ENCODE measurements at regions of chr9 and their contacts with region 1.

Region 1: GRCh38 chr9:136275655-136276429 is 28.1 kb downstream of the CCDC187 start:
- DNase-seq: no peak
- ATAC-seq: no peak
- H3K4me3 ChIP-seq: no peak overlapping the region
- H3K27ac ChIP-seq: no peak overlapping the region
- H3K4me1 ChIP-seq: no peaks in the 10 kb centered on the region
- H3K27me3 ChIP-seq: no peaks in the 10 kb centered on the region
- CTCF ChIP-seq: no peak
- POLR2A ChIP-seq: no peak

Region 2: GRCh38 chr9:136143216-136144001 is 132.4 kb before region 1 on chr9:
- intact Hi-C with region 1: loop called in 1 of 2 experiments (anchors 10 kb)
- DNase-seq: peak in 1 of 3 donors; percentile 49
- ATAC-seq: peak in 3 of 4 donors; percentile 16 to 42 (median 23)
- H3K4me3 ChIP-seq: no peak overlapping the region
- H3K27ac ChIP-seq: no peak overlapping the region
- H3K4me1 ChIP-seq: no peaks in the 10 kb centered on the region
- H3K27me3 ChIP-seq: no peaks in the 10 kb centered on the region
- CTCF ChIP-seq: peak in 3 of 4 donors; percentile 12 to 39 (median 22)
- POLR2A ChIP-seq: no peak

Region 3: GRCh38 chr9:136157477-136158265 is 118.2 kb before region 1 on chr9:
- intact Hi-C with region 1: no loop called
- DNase-seq: no peak
- ATAC-seq: peak in 2 of 4 donors; percentile 7 to 24
- H3K4me3 ChIP-seq: no peak overlapping the region
- H3K27ac ChIP-seq: no peak overlapping the region
- H3K4me1 ChIP-seq: no peaks in the 10 kb centered on the region
- H3K27me3 ChIP-seq: no peaks in the 10 kb centered on the region
- CTCF ChIP-seq: no peak
- POLR2A ChIP-seq: no peak

Region 4: DNA sequence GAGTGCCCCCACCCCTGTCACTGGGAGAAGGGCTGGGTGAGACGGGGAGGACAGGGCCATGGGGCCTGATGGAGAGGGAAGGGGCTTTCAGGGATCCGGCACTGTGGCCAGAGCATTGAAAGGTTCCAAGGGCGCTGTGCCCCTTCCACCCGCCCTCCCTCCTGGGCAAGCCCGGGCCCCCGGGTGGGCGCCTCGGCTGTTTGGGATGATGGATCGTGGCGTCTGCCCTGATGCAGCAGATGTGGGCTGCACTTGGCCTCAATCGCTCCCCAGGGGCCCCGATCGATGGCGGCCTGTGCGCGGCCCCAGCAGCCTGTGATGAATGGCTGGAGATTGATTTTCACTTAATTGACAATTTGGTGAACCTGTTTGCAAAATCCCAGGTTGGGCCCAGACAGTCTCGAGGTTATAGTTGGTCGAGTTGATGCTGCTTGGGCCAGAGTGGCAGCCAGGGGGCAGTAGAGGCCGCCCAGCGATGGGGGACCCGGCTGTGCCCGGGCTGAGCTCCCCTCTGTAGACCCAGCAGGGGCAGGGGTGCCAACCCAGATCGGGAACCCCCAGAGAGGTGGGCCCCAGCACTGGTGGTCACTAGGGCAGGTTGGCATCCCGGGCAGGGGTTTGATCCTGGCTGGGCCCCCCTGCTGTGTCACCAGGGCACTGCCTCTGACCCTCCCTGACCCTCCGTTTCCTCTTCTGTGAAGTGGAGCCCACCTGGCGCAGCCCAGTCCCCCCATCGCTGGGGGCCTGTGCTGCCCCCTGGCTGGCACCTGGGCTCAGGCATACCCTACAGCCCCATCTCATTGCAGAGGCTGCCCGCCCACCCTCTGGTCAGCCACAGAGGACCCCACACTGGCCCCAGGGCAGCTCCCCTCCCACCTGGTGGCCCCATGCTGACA is 105.6 kb before region 1 on chr9:
- intact Hi-C with region 1: loop called in 1 of 2 experiments (anchors 10 kb)
- DNase-seq: peak; percentile 49 to 63 (median 57)
- ATAC-seq: peak; percentile 76 to 90 (median 85)
- H3K4me3 ChIP-seq: no peak overlapping the region
- H3K27ac ChIP-seq: no peak overlapping the region
- H3K4me1 ChIP-seq: no peaks in the 10 kb centered on the region
- H3K27me3 ChIP-seq: no peaks in the 10 kb centered on the region
- CTCF ChIP-seq: peak; percentile 66 to 81 (median 69)
- POLR2A ChIP-seq: no peak

Region 5: GRCh38 chr9:137114610-137115391 is 839.0 kb after region 1 on chr9 and contains the start of gene DPP7:
- intact Hi-C with region 1: no loop called
- DNase-seq: peak; percentile 83 to 85 (median 85)
- ATAC-seq: peak; percentile 88 to 97 (median 90)
- H3K4me3 ChIP-seq: peak within 1 kb of the TSS; percentile 68 to 79 (median 70)
- H3K27ac ChIP-seq: no peak within 1 kb of the TSS
- H3K4me1 ChIP-seq: peaks cover 0 to 4% (median 1%) of the 10 kb centered on the region in 4 donors
- H3K27me3 ChIP-seq: no peaks in the 10 kb centered on the region
- CTCF ChIP-seq: no peak
- POLR2A ChIP-seq: peak; percentile 57
- total RNA-seq, gene DPP7: 62.2 to 86.2 (median 66.2) TPM

Measured in right lobe of liver (tissue), 6 donors.